ENCODE measurements at regions of chr2 and their contacts with region 1.

Region 1: DNA sequence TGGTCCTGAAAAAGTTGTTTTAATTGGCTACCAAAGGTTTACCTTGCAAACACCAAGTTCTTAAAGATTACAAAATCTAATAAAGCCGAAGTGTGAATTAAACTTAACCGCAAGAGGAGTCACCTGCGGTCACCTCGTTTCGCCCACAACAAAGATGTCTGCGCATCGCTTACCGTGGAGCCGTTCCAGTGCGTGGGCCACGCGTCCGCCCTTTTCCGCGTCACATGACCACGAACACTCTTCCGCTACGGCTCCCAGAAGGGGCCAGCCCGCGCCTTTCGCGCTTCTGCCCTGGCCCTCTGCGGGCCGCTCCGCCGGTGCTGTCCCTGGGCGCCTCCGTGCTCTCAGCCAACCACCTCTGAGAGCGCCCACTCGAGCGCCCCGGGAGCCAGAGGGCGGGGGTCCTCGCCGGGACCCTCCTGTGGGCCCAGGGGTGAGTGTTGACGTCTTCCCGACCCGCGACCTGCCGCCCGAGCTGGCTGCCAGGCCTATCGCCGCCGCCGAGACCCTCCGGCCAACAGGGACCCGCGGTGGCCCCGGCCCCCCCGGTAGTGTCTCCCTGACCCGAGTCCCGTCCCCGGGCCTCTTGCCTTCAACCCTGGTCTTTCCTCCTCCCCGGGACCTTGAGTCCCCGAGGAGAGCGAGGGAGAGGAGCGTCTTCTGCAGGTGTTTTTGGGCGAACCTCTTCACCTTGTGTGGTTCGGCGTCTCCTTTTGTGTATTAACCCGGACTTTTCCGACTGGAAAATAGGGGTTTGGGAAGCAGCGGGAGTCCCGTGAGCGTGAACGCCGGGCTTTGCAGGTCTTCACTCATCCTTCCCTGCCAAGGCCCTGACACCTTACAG is at the start of gene MFF:
- DNase-seq: peak; percentile 91
- ATAC-seq: peak; percentile 96
- H3K4me3 ChIP-seq: peak within 1 kb of the TSS; percentile 86
- H3K27ac ChIP-seq: peak within 1 kb of the TSS; percentile 76
- H3K4me1 ChIP-seq: 0 out of 2 replicates have a peak, but pooled peaks cover 2% of the 10 kb centered on the region
- H3K27me3 ChIP-seq: no peaks in the 10 kb centered on the region
- CTCF ChIP-seq: no peak
- POLR2A ChIP-seq: peak; percentile 82
- RAD21 ChIP-seq: no peak
- total RNA-seq, gene MFF: 86.4 and 96.4 TPM in 2 replicates

Region 2: GRCh38 chr2:225458431-225459117 is 1866.6 kb before region 1 on chr2:
- CTCF ChIA-PET with region 1: no interaction called
- POLR2A ChIA-PET with region 1: interaction called, 16 read pairs
- dilution Hi-C with region 1: no loop called
- in situ Hi-C with region 1: no loop called
- intact Hi-C with region 1: no loop called
- DNase-seq: no peak
- ATAC-seq: no peak
- H3K4me3 ChIP-seq: no peak overlapping the region
- H3K27ac ChIP-seq: no peak overlapping the region
- H3K4me1 ChIP-seq: no peaks in the 10 kb centered on the region
- H3K27me3 ChIP-seq: no peaks in the 10 kb centered on the region
- CTCF ChIP-seq: no peak
- POLR2A ChIP-seq: no peak
- RAD21 ChIP-seq: no peak

Region 3: DNA sequence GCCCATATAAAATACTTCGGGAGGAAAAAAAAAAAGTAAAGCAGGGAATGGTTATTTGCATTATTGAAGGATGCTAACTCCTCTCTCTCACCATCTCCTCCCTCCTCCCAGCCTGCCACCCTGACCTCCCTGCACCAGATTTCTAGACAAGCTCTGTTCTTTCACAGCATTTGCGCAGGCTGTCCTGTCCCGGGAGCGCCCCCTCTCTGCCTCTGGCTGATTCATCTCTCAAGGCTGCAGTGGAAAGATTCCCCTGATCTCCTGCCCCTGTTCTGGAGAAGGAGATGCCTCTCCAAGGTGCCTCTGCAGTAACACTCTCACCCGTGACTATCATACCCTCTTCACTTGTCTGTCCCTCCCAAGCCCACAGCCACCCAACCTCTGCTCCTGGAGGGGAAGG is 199.7 kb before region 1 on chr2:
- CTCF ChIA-PET with region 1: no interaction called
- POLR2A ChIA-PET with region 1: no interaction called
- dilution Hi-C with region 1: no loop called
- in situ Hi-C with region 1: no loop called
- intact Hi-C with region 1: loop called (anchors 10 kb)
- DNase-seq: no peak
- ATAC-seq: no peak
- H3K4me3 ChIP-seq: no peak overlapping the region
- H3K27ac ChIP-seq: no peak overlapping the region
- H3K4me1 ChIP-seq: no peaks in the 10 kb centered on the region
- H3K27me3 ChIP-seq: peaks cover 24% of the 10 kb centered on the region
- CTCF ChIP-seq: no peak
- POLR2A ChIP-seq: no peak
- RAD21 ChIP-seq: no peak

Region 4: GRCh38 chr2:227363756-227364155 is 38.5 kb after region 1 on chr2:
- CTCF ChIA-PET with region 1: no interaction called
- POLR2A ChIA-PET with region 1: no interaction called
- dilution Hi-C with region 1: no loop called
- in situ Hi-C with region 1: no loop called
- intact Hi-C with region 1: no loop called
- DNase-seq: no peak
- ATAC-seq: no peak
- H3K4me3 ChIP-seq: no peak overlapping the region
- H3K27ac ChIP-seq: no peak overlapping the region
- H3K4me1 ChIP-seq: peaks cover 10% of the 10 kb centered on the region
- H3K27me3 ChIP-seq: no peaks in the 10 kb centered on the region
- CTCF ChIP-seq: 0 out of 2 replicates have a peak, but pooled peaks have one; percentile 6
- POLR2A ChIP-seq: no peak
- RAD21 ChIP-seq: no peak

Region 5: DNA sequence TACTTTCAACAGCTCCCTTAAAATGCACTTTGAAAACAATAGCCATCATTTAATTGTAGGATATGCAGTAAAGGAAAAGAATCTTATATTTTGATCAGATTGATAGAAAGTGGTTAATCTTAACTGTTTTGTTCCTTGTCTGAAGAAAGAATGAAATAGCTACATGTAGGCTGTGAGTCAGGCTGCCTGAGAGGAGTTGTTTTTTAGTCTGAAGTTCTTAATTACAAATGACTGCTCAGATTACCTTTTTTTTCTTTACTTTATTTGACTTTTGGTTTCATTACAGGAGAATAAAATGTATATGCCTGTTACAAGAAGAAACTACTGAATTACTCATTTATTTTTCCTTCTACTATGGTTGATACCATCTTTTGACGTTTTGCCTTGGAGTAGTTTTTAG is 203.6 kb after region 1 on chr2:
- CTCF ChIA-PET with region 1: no interaction called
- POLR2A ChIA-PET with region 1: no interaction called
- dilution Hi-C with region 1: no loop called
- in situ Hi-C with region 1: no loop called
- intact Hi-C with region 1: loop called (anchors 5 kb)
- DNase-seq: no peak
- ATAC-seq: no peak
- H3K4me3 ChIP-seq: no peak overlapping the region
- H3K27ac ChIP-seq: no peak overlapping the region
- H3K4me1 ChIP-seq: no peaks in the 10 kb centered on the region
- H3K27me3 ChIP-seq: no peaks in the 10 kb centered on the region
- CTCF ChIP-seq: no peak
- POLR2A ChIP-seq: no peak
- RAD21 ChIP-seq: no peak

Measured in IMR-90 (cell line).